Adrenal gland (tissue), 19 donors: ENCODE measurements at regions of chr7 and their contacts with region 1.

Region 1: GRCh38 chr7:75789361-75789924 is 17.4 kb upstream of the CCL26 start:
- DNase-seq: no peak
- H3K4me3 ChIP-seq: no peak overlapping the region
- H3K27ac ChIP-seq: peak overlapping the region in 1 of 5 donors; percentile 22
- H3K4me1 ChIP-seq: peaks cover 6 to 10% of the 10 kb centered on the region in 2 donors
- H3K27me3 ChIP-seq: no peaks in the 10 kb centered on the region
- CTCF ChIP-seq: no peak
- POLR2A ChIP-seq: no peak

Region 2: DNA sequence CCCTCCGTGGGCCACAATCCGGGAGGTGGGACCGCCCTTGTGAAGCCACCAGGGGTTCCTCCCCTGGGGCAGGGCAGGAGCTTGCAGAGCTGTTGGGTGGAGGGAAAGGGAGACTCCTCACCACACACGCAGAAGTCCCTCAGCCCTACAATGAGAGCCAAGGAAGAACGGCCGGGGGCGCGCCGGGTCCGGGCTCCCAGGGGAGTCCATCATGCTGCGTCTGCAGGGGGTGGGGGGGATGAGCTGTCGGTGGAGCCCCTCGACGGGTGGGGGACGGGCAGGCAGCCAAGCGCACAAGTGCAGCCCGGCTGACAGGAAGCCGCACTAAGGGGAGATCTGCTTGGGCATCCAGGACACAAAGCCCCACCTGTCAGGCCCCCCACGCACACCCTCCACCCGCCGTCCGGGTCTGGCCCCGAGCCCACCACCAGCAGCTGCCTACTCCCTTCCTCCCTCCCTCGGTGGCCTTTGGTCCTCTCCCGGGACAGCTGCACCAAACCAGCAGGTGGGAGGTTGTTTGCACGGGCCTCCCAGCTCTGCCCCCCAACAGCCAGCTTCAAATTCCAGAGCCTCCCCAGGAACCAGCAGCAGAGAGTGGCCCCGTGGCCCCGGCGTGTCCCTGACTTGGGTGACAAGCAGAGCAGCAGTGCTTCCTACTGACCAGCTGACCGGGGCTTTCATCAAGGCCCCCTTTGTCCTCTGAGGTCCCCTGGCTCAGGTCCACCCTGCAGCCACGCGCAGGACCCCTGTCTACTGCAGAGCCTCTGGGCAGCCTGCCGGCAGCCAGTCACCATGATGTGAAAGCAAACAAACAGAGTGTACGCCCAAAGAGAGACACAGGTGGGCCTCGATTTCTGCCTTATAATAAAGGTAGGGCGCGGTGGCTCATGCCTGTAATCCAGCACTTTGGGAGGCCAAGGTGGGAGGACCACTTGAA is 101.0 kb before region 1 on chr7:
- intact Hi-C with region 1: no loop called
- DNase-seq: no peak
- H3K4me3 ChIP-seq: no peak overlapping the region
- H3K27ac ChIP-seq: no peak overlapping the region
- H3K4me1 ChIP-seq: no peaks in the 10 kb centered on the region
- H3K27me3 ChIP-seq: no peaks in the 10 kb centered on the region
- CTCF ChIP-seq: no peak
- POLR2A ChIP-seq: no peak

Region 3: GRCh38 chr7:76011442-76011861 is 222.0 kb after region 1 on chr7:
- intact Hi-C with region 1: loop called in 1 of 2 experiments (anchors 10 kb)
- DNase-seq: no peak
- H3K4me3 ChIP-seq: no peak overlapping the region
- H3K27ac ChIP-seq: peak overlapping the region in 2 of 5 donors; percentile 5 to 45
- H3K4me1 ChIP-seq: peaks cover 0 to 9% of the 10 kb centered on the region in 2 donors
- H3K27me3 ChIP-seq: no peaks in the 10 kb centered on the region
- CTCF ChIP-seq: no peak
- POLR2A ChIP-seq: no peak